HepG2 (cell line): ENCODE measurements at regions of chr11 and their contacts with region 1.

Region 1: GRCh38 chr11:75814686-75815344 is at the start of gene UVRAG:
- DNase-seq: peak; percentile 99
- ATAC-seq: peak; percentile 90
- H3K4me3 ChIP-seq: peak within 1 kb of the TSS; percentile 82 to 92 (median 91)
- H3K27ac ChIP-seq: peak within 1 kb of the TSS; percentile 83
- H3K4me1 ChIP-seq: peaks cover 77% of the 10 kb centered on the region
- H3K27me3 ChIP-seq: no peaks in the 10 kb centered on the region; a peak in 1 of 5 replicates
- CTCF ChIP-seq: no peak
- EP300 ChIP-seq: peak in 1 of 2 experiments; percentile 21; a peak in 1 of 4 replicates
- POLR2A ChIP-seq: peak; percentile 43 to 69; a peak in 3 of 4 replicates
- RAD21 ChIP-seq: 0 out of 2 replicates have a peak, but pooled peaks have one; percentile 37
- total RNA-seq, gene UVRAG: 17.2 and 17.3 TPM in 2 replicates

Region 2: GRCh38 chr11:75797792-75798191 is 17.0 kb before region 1 on chr11:
- CTCF ChIA-PET with region 1: no interaction called
- POLR2A ChIA-PET with region 1: interaction called, 10 read pairs
- in situ Hi-C with region 1: no loop called
- intact Hi-C with region 1: no loop called
- DNase-seq: no peak
- ATAC-seq: no peak
- H3K4me3 ChIP-seq: no peak overlapping the region
- H3K27ac ChIP-seq: no peak overlapping the region
- H3K4me1 ChIP-seq: peaks cover 61% of the 10 kb centered on the region
- H3K27me3 ChIP-seq: no peaks in the 10 kb centered on the region
- CTCF ChIP-seq: no peak
- EP300 ChIP-seq: no peak
- POLR2A ChIP-seq: no peak
- RAD21 ChIP-seq: no peak

Region 3: DNA sequence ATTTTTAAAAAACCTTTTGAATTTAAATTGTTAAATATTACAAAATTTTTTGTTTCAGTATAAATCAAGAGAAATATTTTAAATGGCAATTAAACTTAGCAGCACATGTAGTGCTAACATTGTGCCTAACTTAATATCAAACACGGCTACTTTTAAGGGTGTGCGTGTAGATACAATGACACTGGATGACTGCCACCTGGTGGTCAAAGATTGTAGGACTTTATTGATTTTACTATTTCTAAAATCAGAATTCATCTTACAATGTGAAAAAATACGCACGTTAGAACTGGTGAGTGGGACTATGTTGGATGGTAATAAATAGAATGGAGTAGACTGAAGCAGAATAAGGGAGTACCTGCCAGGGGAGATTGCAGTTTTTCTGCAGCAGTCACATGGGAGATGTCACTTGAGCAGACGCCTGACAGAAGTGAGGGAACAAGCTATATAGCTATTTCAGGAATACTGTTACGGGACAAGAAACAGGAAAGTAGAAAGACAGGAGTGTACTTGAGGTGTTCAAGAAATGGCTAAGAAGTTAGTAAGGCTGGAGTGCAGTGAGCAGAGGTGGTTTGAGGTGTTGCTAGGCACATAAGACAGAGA is 53.1 kb after region 1 on chr11:
- CTCF ChIA-PET with region 1: no interaction called
- POLR2A ChIA-PET with region 1: no interaction called
- in situ Hi-C with region 1: loop called (anchors 5 kb)
- intact Hi-C with region 1: no loop called
- DNase-seq: peak; percentile 43
- ATAC-seq: peak; percentile 47; the same call in 2 of the 3 replicates
- H3K4me3 ChIP-seq: no peak overlapping the region
- H3K27ac ChIP-seq: no peak overlapping the region
- H3K4me1 ChIP-seq: no peaks in the 10 kb centered on the region
- H3K27me3 ChIP-seq: no peaks in the 10 kb centered on the region
- CTCF ChIP-seq: peak; percentile 71
- EP300 ChIP-seq: no peak
- POLR2A ChIP-seq: no peak
- RAD21 ChIP-seq: peak; percentile 68

Region 4: DNA sequence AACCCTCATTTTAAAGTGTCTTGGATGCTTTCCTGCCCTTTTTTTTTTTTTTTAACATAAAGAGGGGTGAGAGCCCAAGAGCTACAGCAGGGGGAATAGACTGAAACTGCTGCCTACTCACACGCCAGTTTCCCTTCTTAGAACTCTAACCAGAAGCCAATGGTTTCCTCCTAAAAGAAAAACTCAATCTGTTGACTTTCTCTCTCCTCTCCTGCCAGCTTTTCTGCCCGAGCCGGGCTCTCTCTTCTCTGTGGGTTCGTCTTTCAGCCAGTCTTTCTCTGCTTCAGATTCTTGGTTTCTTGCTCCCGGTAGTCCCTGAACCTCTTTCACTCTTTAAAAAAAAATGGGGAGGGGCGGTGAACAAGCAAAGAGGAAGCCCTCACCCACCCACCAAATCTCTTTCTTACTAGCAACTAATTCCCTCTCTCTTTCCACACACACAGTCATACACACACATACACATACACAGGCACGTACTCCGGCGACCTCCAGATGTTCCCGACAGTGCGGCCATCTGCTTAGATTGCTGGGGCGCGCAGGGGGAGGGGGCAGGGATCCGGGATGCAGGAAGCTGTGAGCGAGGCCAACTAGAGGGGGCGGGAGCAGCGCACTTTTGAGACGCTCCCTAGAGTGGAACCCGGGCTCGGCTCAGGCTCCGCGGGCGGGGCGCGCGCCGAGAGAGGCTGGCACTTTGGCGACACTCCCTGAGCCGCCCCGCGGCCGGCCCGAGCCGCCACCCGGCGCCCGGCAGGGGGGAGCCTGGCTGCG is 967.9 kb after region 1 on chr11:
- CTCF ChIA-PET with region 1: no interaction called
- POLR2A ChIA-PET with region 1: no interaction called
- in situ Hi-C with region 1: no loop called
- intact Hi-C with region 1: loop called (anchors 10 kb)
- DNase-seq: peak; percentile 82
- ATAC-seq: peak; percentile 48
- H3K4me3 ChIP-seq: peak overlapping the region; percentile 88 to 97 (median 92)
- H3K27ac ChIP-seq: peak overlapping the region; percentile 93
- H3K4me1 ChIP-seq: peaks cover 62% of the 10 kb centered on the region
- H3K27me3 ChIP-seq: no peaks in the 10 kb centered on the region
- CTCF ChIP-seq: no peak
- EP300 ChIP-seq: no peak
- POLR2A ChIP-seq: no peak
- RAD21 ChIP-seq: peak; percentile 56; the same call in 1 of the 2 replicates